Gastrocnemius medialis (tissue), 4 donors: ENCODE measurements at regions of chr14 and their contacts with region 1.

Region 1: GRCh38 chr14:50773632-50774541 is 57.1 kb downstream of the NIN start:
- DNase-seq: peak in 1 of 2 donors; percentile 53
- ATAC-seq: peak; percentile 48 to 74
- H3K4me3 ChIP-seq: no peak overlapping the region
- H3K27ac ChIP-seq: peak overlapping the region in 3 of 4 donors; percentile 70 to 79 (median 79)
- H3K4me1 ChIP-seq: peaks cover 17 to 37% of the 10 kb centered on the region in 2 donors
- H3K27me3 ChIP-seq: no peaks in the 10 kb centered on the region
- CTCF ChIP-seq: peak; percentile 58 to 87 (median 79)
- POLR2A ChIP-seq: no peak

Region 2: GRCh38 chr14:50542941-50543418 is 230.9 kb before region 1 on chr14:
- in situ Hi-C with region 1: loop called in 1 of 4 experiments (anchors 10 kb)
- intact Hi-C with region 1: loop called (anchors 1 kb)
- DNase-seq: peak in 1 of 2 donors; percentile 6
- ATAC-seq: peak; percentile 19 to 42
- H3K4me3 ChIP-seq: no peak overlapping the region
- H3K27ac ChIP-seq: peak overlapping the region in 3 of 4 donors; percentile 6 to 34 (median 28)
- H3K4me1 ChIP-seq: peaks cover 14 to 27% of the 10 kb centered on the region in 2 donors
- H3K27me3 ChIP-seq: no peaks in the 10 kb centered on the region
- CTCF ChIP-seq: peak; percentile 38 to 58 (median 44)
- POLR2A ChIP-seq: no peak

Region 3: DNA sequence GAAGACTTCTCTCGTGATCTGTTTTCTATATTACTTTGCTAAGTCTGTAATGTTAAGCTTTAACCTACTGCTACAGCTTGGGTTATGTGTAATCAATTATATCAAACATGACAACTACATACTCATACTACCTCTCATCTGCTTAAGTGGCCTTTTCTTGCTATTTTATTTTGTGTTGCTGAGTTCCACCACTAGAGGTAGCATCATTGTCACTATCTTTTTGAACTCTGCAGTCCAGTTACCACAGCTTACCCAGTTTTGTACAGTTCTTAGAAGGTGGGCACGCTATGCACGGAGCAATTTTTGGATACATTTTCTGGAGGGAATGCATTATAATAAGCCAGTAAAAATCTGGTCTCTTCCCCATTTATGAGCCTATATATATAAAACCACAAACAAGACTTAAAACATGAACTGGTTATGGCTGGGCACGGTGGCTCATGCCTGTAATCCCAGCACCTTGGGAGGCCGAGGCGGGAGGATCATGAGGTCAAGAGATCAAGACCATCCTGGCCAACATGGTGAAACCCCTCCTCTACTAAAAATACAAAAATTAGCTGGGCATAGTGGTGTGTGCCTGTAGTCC is 154.2 kb before region 1 on chr14:
- in situ Hi-C with region 1: loop called in 1 of 4 experiments (anchors 10 kb)
- intact Hi-C with region 1: loop called (anchors 5 kb)
- DNase-seq: no peak
- ATAC-seq: no peak
- H3K4me3 ChIP-seq: no peak overlapping the region
- H3K27ac ChIP-seq: no peak overlapping the region
- H3K4me1 ChIP-seq: no peaks in the 10 kb centered on the region
- H3K27me3 ChIP-seq: no peaks in the 10 kb centered on the region
- CTCF ChIP-seq: peak in 4 of 5 experiments; percentile 36 to 54 (median 50)
- POLR2A ChIP-seq: no peak

Region 4: GRCh38 chr14:50736932-50737419 is 36.9 kb before region 1 on chr14:
- in situ Hi-C with region 1: no loop called
- intact Hi-C with region 1: loop called (anchors 5 kb)
- DNase-seq: no peak
- ATAC-seq: no peak
- H3K4me3 ChIP-seq: no peak overlapping the region
- H3K27ac ChIP-seq: peak overlapping the region in 3 of 4 donors; percentile 16 to 51 (median 27)
- H3K4me1 ChIP-seq: peaks cover 30 to 39% of the 10 kb centered on the region in 2 donors
- H3K27me3 ChIP-seq: no peaks in the 10 kb centered on the region
- CTCF ChIP-seq: no peak
- POLR2A ChIP-seq: no peak